CD4-positive, alpha-beta T cell (primary cell): ENCODE measurements at regions of chr10 and their contacts with region 1.

Region 1: GRCh38 chr10:22550732-22551131 is 163.6 kb downstream of the PIP4K2A start:
- DNase-seq: peak; percentile 59 to 84 (median 68)
- ATAC-seq: peak; percentile 73
- H3K4me3 ChIP-seq: no peak overlapping the region
- H3K4me3 Mint-ChIP-seq: no peak overlapping the region
- H3K27ac ChIP-seq: no peak overlapping the region
- H3K27ac Mint-ChIP-seq: peak overlapping the region; percentile 2
- H3K4me1 ChIP-seq: no peaks in the 10 kb centered on the region
- H3K4me1 Mint-ChIP-seq: peaks cover 5% of the 10 kb centered on the region
- H3K27me3 ChIP-seq: no peaks in the 10 kb centered on the region
- H3K27me3 Mint-ChIP-seq: no peaks in the 10 kb centered on the region
- CTCF ChIP-seq: peak; percentile 81

Region 2: DNA sequence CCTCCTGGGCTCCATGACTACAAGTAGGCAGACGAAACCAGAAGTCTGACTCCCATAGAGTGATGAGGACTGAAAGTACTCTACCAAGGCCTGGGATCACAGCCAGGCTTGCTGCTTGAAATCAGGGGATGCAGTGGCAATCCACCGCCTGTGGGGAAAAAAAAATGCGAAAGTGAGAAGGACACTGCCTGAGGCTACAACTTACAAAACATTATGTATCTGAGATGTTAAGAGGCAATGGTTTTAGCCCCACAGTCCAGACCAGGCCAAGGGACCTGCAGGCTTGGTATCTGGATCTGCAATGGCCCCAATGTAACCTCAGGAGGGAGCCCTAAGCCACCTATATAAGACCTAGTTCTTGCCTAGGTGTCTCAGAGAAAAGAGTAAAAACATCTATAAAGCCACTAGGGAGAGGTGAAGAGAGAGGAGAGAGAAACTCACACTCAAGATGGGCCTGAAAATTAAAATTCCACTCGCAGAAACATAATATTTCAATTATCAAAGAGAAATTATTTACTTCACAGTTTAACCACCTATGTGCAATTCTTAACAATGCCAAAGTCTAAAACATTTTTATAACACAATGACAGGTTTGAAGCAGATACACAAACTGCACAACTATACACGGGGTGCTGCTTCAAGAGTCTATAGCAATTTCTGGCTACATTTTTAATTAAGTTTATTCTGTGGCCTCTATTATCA is 561.1 kb before region 1 on chr10:
- CTCF ChIA-PET with region 1: interaction called, 3 read pairs
- POLR2A ChIA-PET with region 1: no interaction called
- intact Hi-C with region 1: loop called in 1 of 2 experiments (anchors 2 kb)
- DNase-seq: peak in 9 of 14 experiments; percentile 3 to 67 (median 19)
- ATAC-seq: peak; percentile 87
- H3K4me3 ChIP-seq: no peak overlapping the region
- H3K4me3 Mint-ChIP-seq: no peak overlapping the region
- H3K27ac ChIP-seq: no peak overlapping the region
- H3K27ac Mint-ChIP-seq: no peak overlapping the region
- H3K4me1 ChIP-seq: peaks cover 3% of the 10 kb centered on the region
- H3K4me1 Mint-ChIP-seq: peaks cover 10% of the 10 kb centered on the region
- H3K27me3 ChIP-seq: no peaks in the 10 kb centered on the region
- H3K27me3 Mint-ChIP-seq: no peaks in the 10 kb centered on the region
- CTCF ChIP-seq: peak; percentile 57

Region 3: DNA sequence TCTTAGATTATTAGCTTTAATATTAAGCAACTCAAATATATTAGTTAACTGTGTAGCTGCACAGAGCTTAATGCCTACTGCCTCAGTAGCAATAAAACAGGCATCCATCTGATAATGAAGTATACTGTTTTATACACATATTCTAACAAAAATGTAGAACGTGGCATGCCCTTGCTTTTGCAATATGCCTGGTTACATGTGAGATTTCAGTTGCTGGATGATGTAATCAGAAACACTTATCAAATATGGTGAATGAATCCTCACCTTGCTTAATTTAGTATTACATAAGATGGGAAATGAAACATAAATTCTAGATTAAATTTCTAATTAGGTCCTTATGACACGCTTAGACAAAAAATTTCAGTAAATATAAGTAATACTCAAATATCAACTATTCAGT is 555.2 kb before region 1 on chr10:
- CTCF ChIA-PET with region 1: interaction called, 3 read pairs
- POLR2A ChIA-PET with region 1: no interaction called
- intact Hi-C with region 1: loop called (anchors 2 to 5 kb)
- DNase-seq: no peak
- ATAC-seq: no peak
- H3K4me3 ChIP-seq: no peak overlapping the region
- H3K4me3 Mint-ChIP-seq: no peak overlapping the region
- H3K27ac ChIP-seq: no peak overlapping the region
- H3K27ac Mint-ChIP-seq: no peak overlapping the region
- H3K4me1 ChIP-seq: peaks cover 3% of the 10 kb centered on the region
- H3K4me1 Mint-ChIP-seq: peaks cover 22% of the 10 kb centered on the region
- H3K27me3 ChIP-seq: no peaks in the 10 kb centered on the region
- H3K27me3 Mint-ChIP-seq: no peaks in the 10 kb centered on the region
- CTCF ChIP-seq: no peak

Region 4: DNA sequence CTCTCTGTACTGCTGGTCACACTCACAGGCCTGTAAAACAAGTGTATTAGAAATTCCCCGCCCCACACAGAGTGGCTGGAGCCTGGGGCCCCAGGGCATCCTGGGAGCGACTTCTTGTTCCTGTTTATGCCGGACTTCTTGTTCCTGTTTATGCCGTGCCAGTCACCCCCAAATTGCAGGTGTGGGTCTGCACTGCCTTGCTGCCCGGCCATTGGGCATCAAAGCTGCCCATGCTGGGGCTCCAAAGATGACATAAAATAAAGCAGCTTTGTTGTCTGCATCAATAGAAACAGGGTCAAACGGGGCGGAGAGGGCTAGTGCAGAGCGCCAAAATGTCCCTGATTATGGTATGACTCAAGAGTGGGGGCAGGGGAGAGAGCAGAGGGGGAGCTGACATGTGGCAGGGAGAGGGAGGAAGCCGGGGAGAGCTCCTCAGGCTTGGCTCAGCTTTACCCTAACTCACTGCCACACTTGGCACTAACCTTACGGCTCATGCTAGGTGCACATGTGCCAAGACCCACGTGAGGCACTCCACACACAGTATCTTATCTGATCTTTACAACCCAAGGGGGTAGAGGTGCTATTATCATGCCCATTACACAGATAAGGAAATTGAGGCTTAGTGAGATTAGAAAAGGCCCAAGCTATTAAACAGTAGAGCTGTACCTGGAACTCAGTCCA is 65.2 kb after region 1 on chr10:
- CTCF ChIA-PET with region 1: no interaction called
- POLR2A ChIA-PET with region 1: no interaction called
- intact Hi-C with region 1: no loop called
- DNase-seq: peak in 8 of 14 experiments; percentile 22 to 78 (median 44)
- ATAC-seq: peak; percentile 29
- H3K4me3 ChIP-seq: peak overlapping the region; percentile 31
- H3K4me3 Mint-ChIP-seq: peak overlapping the region; percentile 58
- H3K27ac ChIP-seq: peak overlapping the region in 1 of 2 donors; percentile 68
- H3K27ac Mint-ChIP-seq: peak overlapping the region; percentile 98
- H3K4me1 ChIP-seq: peaks cover 80% of the 10 kb centered on the region
- H3K4me1 Mint-ChIP-seq: peaks cover 98% of the 10 kb centered on the region
- H3K27me3 ChIP-seq: no peaks in the 10 kb centered on the region
- H3K27me3 Mint-ChIP-seq: no peaks in the 10 kb centered on the region
- CTCF ChIP-seq: no peak

Region 5: GRCh38 chr10:22894714-22895113 is 344.0 kb after region 1 on chr10:
- CTCF ChIA-PET with region 1: no interaction called
- POLR2A ChIA-PET with region 1: no interaction called
- intact Hi-C with region 1: no loop called
- DNase-seq: no peak
- ATAC-seq: no peak
- H3K4me3 ChIP-seq: no peak overlapping the region
- H3K4me3 Mint-ChIP-seq: no peak overlapping the region
- H3K27ac ChIP-seq: no peak overlapping the region
- H3K27ac Mint-ChIP-seq: no peak overlapping the region
- H3K4me1 ChIP-seq: no peaks in the 10 kb centered on the region
- H3K4me1 Mint-ChIP-seq: no peaks in the 10 kb centered on the region
- H3K27me3 ChIP-seq: no peaks in the 10 kb centered on the region
- H3K27me3 Mint-ChIP-seq: peaks cover 5% of the 10 kb centered on the region
- CTCF ChIP-seq: no peak